ENCODE measurements at regions of chr1 and their contacts with region 1.

Region 1: GRCh38 chr1:33219881-33220661 is 36.2 kb upstream of the ZNF362 start:
- DNase-seq: no peak
- ATAC-seq: no peak

Region 2: GRCh38 chr1:33367485-33368405 is 147.7 kb after region 1 on chr1:
- intact Hi-C with region 1: loop called (anchors 5 kb)
- DNase-seq: peak; percentile 92
- ATAC-seq: peak; percentile 77